K562 (cell line): ENCODE measurements at regions of chr12 and their contacts with region 1.

Region 1: DNA sequence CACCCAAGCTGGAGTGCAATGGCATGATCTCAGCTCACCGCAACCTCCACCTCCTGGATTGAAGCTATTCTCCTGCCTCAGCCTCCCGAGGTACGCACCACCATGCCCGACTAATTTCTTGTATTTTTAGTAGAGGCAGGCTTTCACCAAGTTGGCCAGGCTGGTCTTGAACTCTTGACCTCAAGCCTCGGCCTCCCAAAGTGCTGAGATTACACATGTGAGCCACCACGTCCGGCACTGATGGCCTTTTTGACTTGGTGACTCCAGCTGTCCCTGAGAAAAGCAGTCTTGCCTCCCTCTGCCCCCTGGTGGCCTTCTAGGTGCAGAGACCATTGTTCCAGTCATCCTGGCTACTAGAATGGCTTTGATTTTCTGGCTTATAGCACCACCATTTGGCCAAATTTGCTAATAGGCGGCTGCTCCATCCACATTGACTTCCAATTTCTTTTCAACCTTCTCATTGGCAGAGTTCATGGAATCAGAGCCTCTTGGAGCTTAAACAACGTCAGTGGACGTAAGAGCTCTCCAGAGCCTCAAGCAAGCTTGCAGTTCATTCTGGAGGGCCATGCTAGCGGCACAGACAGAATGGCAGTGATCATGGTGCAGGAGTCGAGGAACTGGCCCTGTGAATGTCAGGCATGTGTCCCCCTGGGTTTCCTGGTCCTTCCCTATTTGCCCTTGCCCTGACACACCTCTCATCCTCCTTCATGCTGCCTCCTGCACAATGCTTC is 25.4 kb upstream of the EIF4B start:
- DNase-seq: peak; percentile 84 to 96 (median 86)
- ATAC-seq: peak; percentile 95
- H3K4me3 ChIP-seq: no peak overlapping the region
- H3K27ac ChIP-seq: no peak overlapping the region
- H3K4me1 ChIP-seq: peaks cover 0 to 14% of the 10 kb centered on the region in 2 experiments; a peak in 3 of 5 replicates
- H3K27me3 ChIP-seq: no peaks in the 10 kb centered on the region
- CTCF ChIP-seq: peak; percentile 99 to 100 (median 99)
- EP300 ChIP-seq: peak; percentile 36; the same call in 1 of the 2 replicates
- POLR2A ChIP-seq: no peak
- RAD21 ChIP-seq: peak; percentile 100

Region 2: GRCh38 chr12:52372216-52373154 is 608.4 kb before region 1 on chr12:
- CTCF ChIA-PET with region 1: interaction called, 4 read pairs
- POLR2A ChIA-PET with region 1: no interaction called
- in situ Hi-C with region 1: no loop called
- intact Hi-C with region 1: loop called (anchors 10 kb)
- DNase-seq: peak; percentile 57 to 71 (median 66)
- ATAC-seq: peak; percentile 78
- H3K4me3 ChIP-seq: no peak overlapping the region
- H3K27ac ChIP-seq: no peak overlapping the region
- H3K4me1 ChIP-seq: no peaks in the 10 kb centered on the region
- H3K27me3 ChIP-seq: peaks cover 1 to 11% of the 10 kb centered on the region in 2 experiments; a peak in 4 of 5 replicates
- CTCF ChIP-seq: peak; percentile 61 to 81 (median 80)
- EP300 ChIP-seq: no peak
- POLR2A ChIP-seq: no peak
- RAD21 ChIP-seq: peak; percentile 72 to 80

Region 3: DNA sequence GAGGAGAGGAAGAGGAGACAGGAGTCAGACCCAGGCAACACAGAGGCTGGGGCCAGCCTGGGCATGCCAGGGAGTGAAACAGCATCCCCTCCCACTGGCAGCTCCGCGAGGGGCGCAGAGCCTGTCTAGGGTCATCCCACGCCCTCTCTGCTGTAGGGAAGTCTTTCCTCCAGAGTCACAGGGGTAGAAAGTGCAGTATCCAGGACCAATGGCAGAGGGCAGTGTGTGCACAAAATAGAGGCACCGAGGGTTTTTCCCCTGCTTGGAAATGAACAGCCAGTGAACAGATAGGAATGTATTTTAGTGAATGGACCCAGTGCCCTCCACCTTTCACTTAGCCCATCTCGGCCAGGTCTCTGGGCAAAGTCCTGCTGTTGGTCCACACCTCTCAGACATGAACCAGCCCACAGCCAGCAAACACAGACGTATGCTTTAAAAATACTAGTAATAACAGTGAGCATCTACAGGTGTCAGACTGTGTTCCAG is 397.8 kb before region 1 on chr12:
- CTCF ChIA-PET with region 1: interaction called, 6 read pairs
- POLR2A ChIA-PET with region 1: no interaction called
- in situ Hi-C with region 1: loop called (anchors 5 kb)
- intact Hi-C with region 1: loop called (anchors 10 kb)
- DNase-seq: peak; percentile 64 to 77 (median 70)
- ATAC-seq: peak; percentile 95
- H3K4me3 ChIP-seq: no peak overlapping the region
- H3K27ac ChIP-seq: no peak overlapping the region
- H3K4me1 ChIP-seq: peaks cover 0 to 6% of the 10 kb centered on the region in 2 experiments; a peak in 1 of 5 replicates
- H3K27me3 ChIP-seq: peaks cover 17 to 40% of the 10 kb centered on the region in 2 experiments; a peak in 4 of 5 replicates
- CTCF ChIP-seq: peak; percentile 84 to 94 (median 90)
- EP300 ChIP-seq: no peak
- POLR2A ChIP-seq: no peak
- RAD21 ChIP-seq: peak; percentile 95 to 98

Region 4: DNA sequence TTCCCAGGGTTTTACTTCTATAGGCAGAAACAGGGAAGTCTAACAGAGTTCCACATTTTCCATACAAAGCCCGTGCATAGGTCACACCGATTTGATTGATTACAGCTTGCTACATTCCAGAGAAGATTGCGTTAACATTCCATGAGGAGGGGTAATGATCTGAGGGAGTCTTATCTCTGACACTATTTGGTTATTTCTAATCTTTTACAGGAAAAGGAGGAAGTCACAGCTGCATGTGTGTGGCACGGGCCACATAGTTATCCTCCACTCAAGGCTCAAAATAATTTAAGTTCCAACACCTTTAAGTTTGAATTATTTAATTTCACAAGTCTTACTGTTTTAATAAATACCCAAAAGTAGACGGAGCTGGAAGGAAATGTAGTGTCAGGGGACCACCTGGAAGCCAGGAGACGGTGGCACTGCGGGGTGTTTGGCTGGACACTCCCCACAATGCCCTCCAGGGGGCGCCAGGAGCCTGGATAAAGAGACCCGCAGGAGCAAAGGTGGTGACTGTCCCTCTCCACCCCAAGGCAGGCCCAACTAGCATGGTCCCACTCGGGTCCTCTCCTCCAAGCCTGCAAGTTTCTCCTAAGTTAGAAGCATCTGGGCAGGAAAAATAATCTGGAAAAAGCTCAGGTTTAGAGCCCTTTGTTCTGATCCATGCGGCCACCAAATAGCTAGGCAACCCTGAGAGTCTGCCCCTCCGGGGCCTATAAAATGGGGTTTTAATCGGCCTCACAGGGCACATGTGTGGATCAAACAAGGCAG is 96.1 kb before region 1 on chr12:
- CTCF ChIA-PET with region 1: interaction called, 398 read pairs
- POLR2A ChIA-PET with region 1: interaction called, 23 read pairs
- in situ Hi-C with region 1: loop called (anchors 5 kb)
- intact Hi-C with region 1: loop called (anchors 1 kb)
- DNase-seq: peak; percentile 83 to 90 (median 88)
- ATAC-seq: peak; percentile 94
- H3K4me3 ChIP-seq: no peak overlapping the region
- H3K27ac ChIP-seq: no peak overlapping the region
- H3K4me1 ChIP-seq: peaks cover 0 to 6% of the 10 kb centered on the region in 2 experiments; a peak in 3 of 5 replicates
- H3K27me3 ChIP-seq: no peaks in the 10 kb centered on the region
- CTCF ChIP-seq: peak; percentile 95 to 97 (median 97)
- EP300 ChIP-seq: no peak
- POLR2A ChIP-seq: no peak
- RAD21 ChIP-seq: peak; percentile 99 to 100

Region 5: DNA sequence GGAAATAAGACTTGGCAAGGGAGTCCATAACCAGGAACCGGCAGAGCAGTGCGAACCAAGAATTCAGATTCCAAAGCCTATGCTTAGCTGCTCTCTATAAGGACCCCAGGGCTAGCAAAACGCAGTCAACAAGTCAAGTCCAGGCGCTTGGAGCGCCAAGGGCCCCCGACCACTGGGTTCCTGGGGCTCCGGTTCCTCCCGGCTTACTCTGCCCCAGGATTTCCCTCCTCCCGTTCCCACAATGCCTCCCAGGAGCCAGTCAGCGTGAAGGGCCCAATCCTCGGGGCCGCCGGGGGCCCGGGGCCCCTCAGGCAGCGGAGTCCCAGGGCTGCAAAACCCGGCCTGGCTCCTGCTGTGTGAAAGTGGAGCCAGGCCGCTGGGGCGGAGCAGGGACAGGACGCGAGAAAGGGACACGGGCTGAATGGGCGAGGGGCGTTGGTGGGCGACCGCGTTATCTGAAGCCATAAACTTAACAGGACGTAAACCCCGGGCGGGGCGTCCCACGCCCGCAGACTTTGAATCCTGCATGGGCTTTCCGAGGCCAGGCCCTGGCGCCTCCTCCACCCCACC is 77.5 kb before region 1 on chr12:
- CTCF ChIA-PET with region 1: interaction called, 29 read pairs
- POLR2A ChIA-PET with region 1: interaction called, 4 read pairs
- in situ Hi-C with region 1: no loop called
- intact Hi-C with region 1: loop called (anchors 1 kb)
- DNase-seq: peak; percentile 88 to 95 (median 91)
- ATAC-seq: peak; percentile 89
- H3K4me3 ChIP-seq: peak overlapping the region; percentile 58
- H3K27ac ChIP-seq: peak overlapping the region; percentile 83
- H3K4me1 ChIP-seq: peaks cover 43 to 53% of the 10 kb centered on the region in 2 experiments
- H3K27me3 ChIP-seq: no peaks in the 10 kb centered on the region
- CTCF ChIP-seq: no peak
- EP300 ChIP-seq: peak; percentile 30; the same call in 1 of the 2 replicates
- POLR2A ChIP-seq: no peak
- RAD21 ChIP-seq: 0 out of 4 replicates have a peak, but pooled peaks of 1 of the 2 experiments have one; percentile 16

Region 6: DNA sequence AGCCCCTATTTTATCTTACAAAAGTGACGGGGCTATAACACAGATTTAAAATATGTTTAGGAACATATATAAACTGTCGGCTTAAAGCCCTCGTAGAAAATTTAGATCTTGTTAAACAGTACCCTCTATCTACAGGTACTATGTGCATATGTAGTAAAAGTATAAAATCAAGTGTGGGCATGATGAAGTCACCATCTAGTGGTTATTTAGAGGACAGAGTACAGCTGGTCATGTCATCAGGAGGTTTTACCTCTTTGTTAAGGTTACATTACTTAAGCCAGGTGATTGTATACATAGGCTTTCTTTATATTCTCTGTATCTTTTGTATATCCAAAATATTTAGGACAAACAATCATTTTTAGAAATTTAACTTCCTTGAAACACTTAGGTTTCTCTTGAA is 50.8 kb after region 1 on chr12:
- CTCF ChIA-PET with region 1: no interaction called
- POLR2A ChIA-PET with region 1: no interaction called
- in situ Hi-C with region 1: no loop called
- intact Hi-C with region 1: no loop called
- DNase-seq: no peak
- ATAC-seq: no peak
- H3K4me3 ChIP-seq: no peak overlapping the region
- H3K27ac ChIP-seq: no peak overlapping the region
- H3K4me1 ChIP-seq: no peaks in the 10 kb centered on the region
- H3K27me3 ChIP-seq: no peaks in the 10 kb centered on the region
- CTCF ChIP-seq: no peak
- EP300 ChIP-seq: no peak
- POLR2A ChIP-seq: no peak
- RAD21 ChIP-seq: no peak